Adrenal gland (tissue), 19 donors: ENCODE measurements at regions of chr14 and their contacts with region 1.

Region 1: GRCh38 chr14:20327005-20327869 is 5.8 kb downstream of the CCNB1IP1 start:
- DNase-seq: peak in 3 of 7 donors; percentile 19 to 42 (median 31)
- H3K4me3 ChIP-seq: no peak overlapping the region
- H3K27ac ChIP-seq: peak overlapping the region in 4 of 5 donors; percentile 10 to 63 (median 54)
- H3K4me1 ChIP-seq: peaks cover 12 to 22% of the 10 kb centered on the region in 2 donors
- H3K27me3 ChIP-seq: no peaks in the 10 kb centered on the region
- CTCF ChIP-seq: peak; percentile 70 to 93 (median 88)
- POLR2A ChIP-seq: no peak

Region 2: DNA sequence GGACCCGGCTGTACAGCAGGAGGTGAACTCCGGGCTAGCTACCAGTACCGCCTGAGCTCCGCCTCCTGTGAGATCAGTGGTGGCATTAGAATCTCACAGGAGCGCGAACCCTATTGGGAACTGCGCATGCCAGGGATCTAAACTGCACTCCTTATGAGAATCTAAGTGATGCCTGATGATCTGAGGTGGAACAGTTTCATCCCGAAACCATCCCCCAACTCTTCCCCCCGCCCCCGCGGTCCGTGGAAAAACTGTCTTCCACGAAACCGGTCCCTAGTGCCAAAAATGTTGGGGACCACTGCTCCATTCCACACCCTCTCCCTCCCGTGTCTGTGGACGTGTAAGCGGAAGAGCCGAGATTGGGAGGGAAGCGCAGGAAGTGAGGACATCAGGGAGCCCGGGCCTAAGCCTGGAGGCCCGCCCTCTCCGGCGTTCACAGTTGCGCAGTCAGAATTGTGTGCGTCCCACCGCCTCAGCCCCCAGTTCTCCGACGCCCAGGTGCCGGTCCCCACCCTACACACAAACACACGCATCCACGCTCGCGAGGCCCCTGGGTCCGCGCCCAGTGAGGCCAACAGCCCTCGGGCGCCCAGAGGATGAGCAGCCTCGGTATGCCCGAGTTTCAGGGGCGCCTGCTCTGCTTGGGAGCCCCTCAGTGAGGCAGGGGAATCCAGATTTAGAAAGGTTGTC is 355.3 kb after region 1 on chr14:
- intact Hi-C with region 1: loop called in 1 of 2 experiments (anchors 10 kb)
- DNase-seq: peak; percentile 86 to 96 (median 91)
- H3K4me3 ChIP-seq: peak overlapping the region; percentile 44 to 87 (median 64)
- H3K27ac ChIP-seq: peak overlapping the region; percentile 95 to 100 (median 100)
- H3K4me1 ChIP-seq: peaks cover 11 to 21% of the 10 kb centered on the region in 2 donors
- H3K27me3 ChIP-seq: no peaks in the 10 kb centered on the region
- CTCF ChIP-seq: peak in 1 of 6 experiments; percentile 2
- POLR2A ChIP-seq: peak; percentile 93 to 95

Region 3: DNA sequence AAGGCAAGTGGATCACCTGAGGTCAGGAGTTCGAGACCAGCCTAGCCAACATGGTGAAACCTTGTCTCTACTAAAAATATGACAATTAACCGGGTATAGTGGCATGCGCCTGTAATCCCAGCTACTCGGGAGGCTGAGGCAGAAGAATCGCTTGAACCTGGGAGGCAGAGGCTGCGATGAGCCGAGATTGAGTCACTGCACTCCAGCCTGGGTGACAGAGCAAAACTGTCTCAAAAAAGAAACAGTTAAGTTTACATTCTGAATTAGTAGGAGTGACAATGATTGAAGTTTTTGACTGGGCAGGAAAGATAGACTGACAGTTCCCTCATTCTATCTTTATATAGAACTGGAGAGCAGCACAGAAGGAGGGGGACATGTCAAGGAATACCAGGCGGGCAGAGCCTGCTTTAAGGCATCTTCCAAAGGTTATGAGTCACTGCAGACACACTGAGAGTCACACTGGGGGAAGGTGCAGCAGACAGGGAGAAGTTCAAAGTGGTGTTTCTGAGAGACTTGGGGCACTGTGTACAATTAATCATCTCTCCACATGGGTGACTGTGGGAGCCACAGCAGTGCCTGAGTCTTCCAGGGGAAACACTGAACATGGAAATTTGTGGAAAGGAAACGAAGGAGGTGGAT is 521.2 kb after region 1 on chr14:
- intact Hi-C with region 1: no loop called
- DNase-seq: no peak
- H3K4me3 ChIP-seq: no peak overlapping the region
- H3K27ac ChIP-seq: peak overlapping the region in 1 of 5 donors; percentile 13
- H3K4me1 ChIP-seq: no peaks in the 10 kb centered on the region
- H3K27me3 ChIP-seq: no peaks in the 10 kb centered on the region
- CTCF ChIP-seq: no peak
- POLR2A ChIP-seq: no peak